ENCODE measurements at regions of chr15 and their contacts with region 1.

Region 1: DNA sequence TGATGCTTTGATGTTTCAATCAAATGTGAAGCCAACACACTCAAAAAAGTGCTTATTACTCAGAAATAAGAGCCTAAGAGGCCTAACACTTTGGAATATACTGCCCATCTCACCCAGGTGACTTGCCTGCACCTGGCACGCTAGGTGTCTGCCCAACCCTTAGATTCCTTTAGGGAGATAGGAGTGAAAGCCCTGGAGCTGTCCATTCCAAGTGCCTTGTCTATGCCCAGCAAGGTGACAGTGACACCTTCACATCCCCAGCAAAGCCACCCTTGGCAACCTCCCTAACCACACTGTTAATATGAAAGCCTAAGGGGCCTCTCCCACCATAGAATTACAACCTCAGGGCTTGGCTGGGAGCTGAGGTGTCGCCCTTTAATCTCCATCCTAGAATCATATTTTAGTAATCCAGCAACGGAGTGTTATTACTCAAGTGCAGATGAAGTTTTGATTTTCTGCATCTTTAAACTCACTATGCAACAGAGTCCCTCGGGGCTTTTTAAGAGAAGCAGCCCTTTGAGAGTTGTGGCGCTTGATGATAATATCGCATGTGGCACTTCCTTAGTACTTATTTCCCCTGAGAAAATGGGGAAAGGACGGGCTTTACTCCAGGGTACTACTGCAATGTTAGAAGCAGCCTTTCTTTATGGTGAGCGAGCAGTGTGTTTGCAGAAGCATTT is 24.8 kb downstream of the ATP10A start:
- DNase-seq: no peak
- H3K4me3 ChIP-seq: no peak overlapping the region
- H3K27ac ChIP-seq: peak overlapping the region in 1 of 59 donors; percentile 17
- H3K27me3 ChIP-seq: peaks cover 0 to 4% (median 0%) of the 10 kb centered on the region in 45 donors
- CTCF ChIP-seq: no peak

Region 2: GRCh38 chr15:25886498-25887140 is 48.3 kb after region 1 on chr15:
- intact Hi-C with region 1: loop called in 1 of 2 experiments (anchors 5 kb)
- DNase-seq: no peak
- H3K4me3 ChIP-seq: no peak overlapping the region
- H3K27ac ChIP-seq: no peak overlapping the region
- H3K27me3 ChIP-seq: no peaks in the 10 kb centered on the region
- CTCF ChIP-seq: no peak